ENCODE measurements at regions of chr1 and their contacts with region 1.

Region 1: GRCh38 chr1:174262349-174263241 is 103.3 kb downstream of the RABGAP1L start:
- DNase-seq: peak in 1 of 3 donors; percentile 28
- ATAC-seq: peak; percentile 69
- H3K4me3 ChIP-seq: no peak overlapping the region
- H3K4me1 ChIP-seq: no peaks in the 10 kb centered on the region
- CTCF ChIP-seq: peak; percentile 24

Region 2: GRCh38 chr1:174364996-174365736 is 102.6 kb after region 1 on chr1:
- intact Hi-C with region 1: no loop called
- DNase-seq: no peak
- ATAC-seq: no peak
- H3K4me3 ChIP-seq: no peak overlapping the region
- H3K4me1 ChIP-seq: no peaks in the 10 kb centered on the region
- CTCF ChIP-seq: no peak

Region 3: DNA sequence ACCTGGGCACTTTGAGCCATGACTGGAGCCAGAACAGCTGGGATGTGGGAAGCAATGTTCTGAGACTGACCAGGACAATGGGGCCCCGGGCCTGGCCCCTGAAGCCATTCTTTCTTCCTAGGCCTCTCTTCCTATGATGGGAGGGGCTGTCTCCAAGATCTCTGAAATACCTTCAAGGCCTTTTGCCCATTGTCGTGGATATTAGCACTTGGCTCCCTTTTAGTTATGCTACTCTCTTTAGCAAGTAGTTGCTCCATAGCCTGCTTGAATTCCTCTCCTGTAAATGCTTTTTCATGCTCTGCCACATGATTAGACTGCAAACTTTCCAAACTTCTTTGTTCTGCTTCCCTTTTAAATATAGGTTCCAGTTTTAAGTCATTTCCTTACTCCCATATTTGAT is 474.2 kb after region 1 on chr1:
- intact Hi-C with region 1: loop called (anchors 5 to 10 kb)
- DNase-seq: no peak
- ATAC-seq: no peak
- H3K4me3 ChIP-seq: no peak overlapping the region
- H3K4me1 ChIP-seq: no peaks in the 10 kb centered on the region
- CTCF ChIP-seq: no peak

Region 4: GRCh38 chr1:174743654-174744561 is 481.3 kb after region 1 on chr1:
- intact Hi-C with region 1: loop called (anchors 5 to 10 kb)
- DNase-seq: no peak
- ATAC-seq: peak; percentile 45
- H3K4me3 ChIP-seq: no peak overlapping the region
- H3K4me1 ChIP-seq: no peaks in the 10 kb centered on the region
- CTCF ChIP-seq: peak; percentile 42

Measured in mucosa of descending colon (tissue), 3 donors.